CD8-positive, alpha-beta T cell (primary cell): ENCODE measurements at regions of chr2 and their contacts with region 1.

Region 1: GRCh38 chr2:97697252-97698235 is 15.8 kb upstream of the ZAP70 start:
- DNase-seq: peak; percentile 86 to 98 (median 90)
- ATAC-seq: peak; percentile 92
- H3K4me3 ChIP-seq: no peak overlapping the region
- H3K4me3 Mint-ChIP-seq: peak overlapping the region; percentile 9
- H3K27ac ChIP-seq: no peak overlapping the region
- H3K27ac Mint-ChIP-seq: no peak overlapping the region
- H3K4me1 ChIP-seq: no peaks in the 10 kb centered on the region
- H3K4me1 Mint-ChIP-seq: peaks cover 7% of the 10 kb centered on the region
- H3K27me3 ChIP-seq: no peaks in the 10 kb centered on the region
- H3K27me3 Mint-ChIP-seq: no peaks in the 10 kb centered on the region
- CTCF ChIP-seq: peak; percentile 85

Region 2: DNA sequence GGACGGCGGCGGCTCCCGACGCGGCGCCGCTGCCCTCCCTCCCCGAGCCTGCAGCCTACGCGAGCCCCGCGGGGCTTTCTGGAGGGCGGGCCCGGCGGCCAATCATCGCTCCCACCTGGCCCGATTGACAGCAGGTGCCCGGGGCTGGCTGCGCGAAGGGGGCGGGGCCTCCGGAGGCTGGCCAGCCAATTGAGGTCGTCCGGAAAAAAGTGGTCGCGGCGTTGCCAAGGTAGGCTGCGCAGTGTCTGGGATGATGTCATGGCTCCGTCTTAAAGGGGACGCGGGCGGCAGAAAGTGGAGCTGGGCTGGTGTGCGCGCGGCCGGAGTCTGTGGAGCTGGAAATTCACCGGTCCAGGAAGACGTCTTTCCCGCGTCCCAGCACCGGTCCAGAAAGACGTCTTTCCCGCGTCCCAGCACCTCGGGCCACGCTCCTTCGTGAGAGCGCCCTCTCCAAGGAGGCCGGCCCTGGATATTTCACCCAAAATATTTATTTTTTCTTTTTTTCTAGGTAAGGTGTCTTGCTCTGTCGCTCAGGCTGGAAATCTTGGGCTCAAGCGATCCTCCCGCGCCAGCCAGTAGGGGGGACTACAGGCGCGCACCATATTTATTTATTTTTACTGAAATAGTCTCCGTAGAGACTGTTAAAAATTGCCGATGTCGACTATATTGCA is 33.4 kb before region 1 on chr2 and contains the start of gene ACTR1B:
- CTCF ChIA-PET with region 1: interaction called, 15 read pairs
- POLR2A ChIA-PET with region 1: interaction called, 3 read pairs
- intact Hi-C with region 1: loop called (anchors 1 kb)
- DNase-seq: peak; percentile 94 to 100 (median 97)
- ATAC-seq: peak; percentile 86
- H3K4me3 ChIP-seq: peak within 1 kb of the TSS; percentile 86 to 93
- H3K4me3 Mint-ChIP-seq: peak within 1 kb of the TSS; percentile 93
- H3K27ac ChIP-seq: peak within 1 kb of the TSS; percentile 94 to 97
- H3K27ac Mint-ChIP-seq: peak within 1 kb of the TSS; percentile 97
- H3K4me1 ChIP-seq: peaks cover 30% of the 10 kb centered on the region
- H3K4me1 Mint-ChIP-seq: peaks cover 28% of the 10 kb centered on the region
- H3K27me3 ChIP-seq: no peaks in the 10 kb centered on the region
- H3K27me3 Mint-ChIP-seq: no peaks in the 10 kb centered on the region
- CTCF ChIP-seq: no peak
- total RNA-seq, gene ACTR1B: 81.9 to 82.1 TPM

Region 3: DNA sequence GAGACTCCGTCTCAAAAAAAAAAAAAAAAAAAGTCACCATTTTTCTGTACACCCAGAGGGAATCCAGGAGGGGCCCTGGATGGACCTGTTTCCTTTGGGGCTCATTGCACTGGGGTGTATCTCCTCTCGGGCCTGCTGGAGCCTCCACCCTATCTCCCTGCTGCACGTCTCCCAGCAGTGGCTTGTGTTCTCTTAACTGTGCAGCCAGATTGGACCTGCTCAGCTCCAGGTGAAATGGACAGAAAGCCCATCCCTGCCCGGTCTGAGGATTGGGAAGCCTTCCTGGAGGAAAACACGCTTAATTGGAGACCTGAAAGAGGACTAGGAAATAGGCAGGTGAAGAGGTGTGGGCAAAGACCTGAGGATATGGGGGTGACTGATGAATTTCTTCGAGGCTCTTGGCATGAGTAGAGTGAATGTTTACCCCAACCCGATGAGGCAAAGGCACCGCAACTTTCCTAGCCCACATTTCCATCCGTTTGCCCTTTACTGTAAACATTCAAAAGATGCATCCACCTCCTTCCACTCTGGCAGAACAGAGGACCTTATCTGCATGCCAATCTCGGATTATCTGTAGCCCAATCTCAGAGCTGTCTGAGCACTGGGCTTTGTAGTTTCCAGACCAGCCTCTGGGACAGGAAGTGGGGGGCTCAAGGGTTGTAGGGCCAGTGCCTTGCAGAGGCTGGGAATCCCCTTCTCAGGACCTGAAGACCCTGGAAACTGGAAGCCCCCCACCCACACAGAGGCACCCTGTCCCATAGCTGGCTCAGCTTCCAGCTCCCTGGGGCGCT is 13.2 kb after region 1 on chr2:
- CTCF ChIA-PET with region 1: interaction called, 185 read pairs
- POLR2A ChIA-PET with region 1: interaction called, 3 read pairs
- intact Hi-C with region 1: loop called in 1 of 2 experiments (anchors 1 kb)
- DNase-seq: peak in 1 of 9 experiments; percentile 50
- ATAC-seq: no peak
- H3K4me3 ChIP-seq: no peak overlapping the region
- H3K4me3 Mint-ChIP-seq: no peak overlapping the region
- H3K27ac ChIP-seq: peak overlapping the region in 1 of 2 experiments; percentile 15
- H3K27ac Mint-ChIP-seq: peak overlapping the region; percentile 55
- H3K4me1 ChIP-seq: peaks cover 51% of the 10 kb centered on the region
- H3K4me1 Mint-ChIP-seq: peaks cover 55% of the 10 kb centered on the region
- H3K27me3 ChIP-seq: no peaks in the 10 kb centered on the region
- H3K27me3 Mint-ChIP-seq: no peaks in the 10 kb centered on the region
- CTCF ChIP-seq: no peak

Region 4: GRCh38 chr2:97728091-97728731 is 30.7 kb after region 1 on chr2:
- CTCF ChIA-PET with region 1: interaction called, 11 read pairs
- POLR2A ChIA-PET with region 1: interaction called, 3 read pairs
- intact Hi-C with region 1: no loop called
- DNase-seq: peak in 5 of 9 experiments; percentile 38 to 63 (median 54)
- ATAC-seq: peak; percentile 76
- H3K4me3 ChIP-seq: no peak overlapping the region
- H3K4me3 Mint-ChIP-seq: no peak overlapping the region
- H3K27ac ChIP-seq: peak overlapping the region; percentile 13 to 32
- H3K27ac Mint-ChIP-seq: peak overlapping the region; percentile 90
- H3K4me1 ChIP-seq: peaks cover 66% of the 10 kb centered on the region
- H3K4me1 Mint-ChIP-seq: peaks cover 77% of the 10 kb centered on the region
- H3K27me3 ChIP-seq: no peaks in the 10 kb centered on the region
- H3K27me3 Mint-ChIP-seq: no peaks in the 10 kb centered on the region
- CTCF ChIP-seq: no peak

Region 5: DNA sequence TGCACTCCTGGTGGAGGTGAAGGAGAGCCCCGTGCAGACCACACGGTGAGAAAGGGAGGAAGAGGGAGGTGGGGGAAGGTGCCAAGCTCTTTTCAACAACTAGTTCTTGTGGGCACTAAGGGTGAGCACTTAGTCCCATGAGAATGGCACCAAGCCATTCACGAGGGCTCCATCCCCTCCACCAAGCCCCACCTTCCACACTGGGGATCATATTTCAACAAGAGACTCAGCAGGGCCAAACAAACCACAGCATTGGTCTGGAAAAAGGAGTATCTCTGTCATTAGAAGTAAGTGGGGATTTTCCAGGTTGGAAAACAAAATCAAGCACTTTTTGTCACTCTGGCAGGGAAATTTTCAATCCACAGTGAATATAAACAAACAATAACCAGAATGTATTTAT is 54.2 kb after region 1 on chr2:
- CTCF ChIA-PET with region 1: interaction called, 181 read pairs
- POLR2A ChIA-PET with region 1: interaction called, 3 read pairs
- intact Hi-C with region 1: loop called (anchors 1 kb)
- DNase-seq: no peak
- ATAC-seq: no peak
- H3K4me3 ChIP-seq: no peak overlapping the region
- H3K4me3 Mint-ChIP-seq: no peak overlapping the region
- H3K27ac ChIP-seq: no peak overlapping the region
- H3K27ac Mint-ChIP-seq: no peak overlapping the region
- H3K4me1 ChIP-seq: peaks cover 20% of the 10 kb centered on the region
- H3K4me1 Mint-ChIP-seq: peaks cover 23% of the 10 kb centered on the region
- H3K27me3 ChIP-seq: no peaks in the 10 kb centered on the region
- H3K27me3 Mint-ChIP-seq: no peaks in the 10 kb centered on the region
- CTCF ChIP-seq: no peak

Region 6: GRCh38 chr2:97890093-97890492 is 192.5 kb after region 1 on chr2:
- CTCF ChIA-PET with region 1: no interaction called
- POLR2A ChIA-PET with region 1: no interaction called
- intact Hi-C with region 1: no loop called
- DNase-seq: no peak
- ATAC-seq: no peak
- H3K4me3 ChIP-seq: no peak overlapping the region
- H3K4me3 Mint-ChIP-seq: no peak overlapping the region
- H3K27ac ChIP-seq: no peak overlapping the region
- H3K27ac Mint-ChIP-seq: no peak overlapping the region
- H3K4me1 ChIP-seq: no peaks in the 10 kb centered on the region
- H3K4me1 Mint-ChIP-seq: no peaks in the 10 kb centered on the region
- H3K27me3 ChIP-seq: no peaks in the 10 kb centered on the region
- H3K27me3 Mint-ChIP-seq: no peaks in the 10 kb centered on the region
- CTCF ChIP-seq: no peak

Region 7: GRCh38 chr2:98385050-98385699 is 687.6 kb after region 1 on chr2:
- CTCF ChIA-PET with region 1: interaction called, 9 read pairs
- POLR2A ChIA-PET with region 1: no interaction called
- intact Hi-C with region 1: loop called (anchors 1 to 2 kb)
- DNase-seq: peak; percentile 50 to 78 (median 70)
- ATAC-seq: peak; percentile 78
- H3K4me3 ChIP-seq: no peak overlapping the region
- H3K4me3 Mint-ChIP-seq: no peak overlapping the region
- H3K27ac ChIP-seq: no peak overlapping the region
- H3K27ac Mint-ChIP-seq: no peak overlapping the region
- H3K4me1 ChIP-seq: no peaks in the 10 kb centered on the region
- H3K4me1 Mint-ChIP-seq: no peaks in the 10 kb centered on the region
- H3K27me3 ChIP-seq: no peaks in the 10 kb centered on the region
- H3K27me3 Mint-ChIP-seq: peaks cover 6% of the 10 kb centered on the region
- CTCF ChIP-seq: peak; percentile 88